H1 (cell line): ENCODE measurements at regions of chr11 and their contacts with region 1.

Region 1: DNA sequence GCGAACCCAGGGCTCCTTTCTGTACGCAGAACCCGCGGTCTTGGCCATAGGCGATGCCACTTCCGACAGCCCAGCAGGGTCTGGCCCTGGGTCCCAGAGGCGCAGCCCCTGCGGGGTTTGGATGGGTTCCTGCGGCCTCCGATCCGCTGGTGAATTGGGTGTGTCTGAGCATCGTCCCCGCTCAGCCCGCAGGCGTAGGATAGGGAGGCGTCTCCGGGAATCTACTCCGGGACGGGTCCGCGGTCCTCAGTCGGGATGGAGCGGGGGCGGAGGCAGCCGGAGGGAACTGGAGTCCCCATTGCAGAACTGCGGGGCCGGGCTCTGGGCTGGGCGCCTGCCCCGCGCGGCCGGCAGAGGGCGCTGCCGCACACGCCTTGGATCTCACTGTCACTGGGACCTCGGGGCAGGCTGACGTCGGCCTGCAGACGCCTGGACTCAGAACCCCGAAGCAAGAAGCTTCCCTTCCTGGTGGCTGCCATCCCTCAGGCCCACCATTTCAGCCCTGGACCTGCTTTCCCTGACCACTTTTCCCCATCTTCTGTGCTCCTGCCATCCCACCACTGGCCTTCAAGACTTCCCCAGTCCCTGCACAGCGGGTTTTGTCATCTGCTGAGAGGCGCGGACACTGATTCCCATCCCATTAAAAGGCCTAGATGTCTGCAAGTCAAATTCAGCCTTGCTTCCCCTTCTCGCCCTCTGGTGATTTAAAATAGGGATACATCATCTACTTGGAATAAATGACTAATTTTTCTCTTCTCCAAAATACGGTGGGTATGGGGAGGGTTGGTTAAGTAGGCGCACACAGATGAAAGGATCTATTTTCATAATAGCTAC is 38.3 kb upstream of the CREB3L1 start:
- DNase-seq: peak; percentile 83 to 97
- H3K4me3 ChIP-seq: peak overlapping the region; percentile 45 to 62 (median 56); a peak in 7 of 8 replicates
- H3K27ac ChIP-seq: no peak overlapping the region
- H3K4me1 ChIP-seq: peaks cover 4 to 25% (median 14%) of the 10 kb centered on the region in 4 experiments
- H3K27me3 ChIP-seq: peaks cover 4 to 13% (median 10%) of the 10 kb centered on the region in 4 experiments; a peak in 6 of 7 replicates
- CTCF ChIP-seq: peak; percentile 89 to 98 (median 96)
- EP300 ChIP-seq: peak in 1 of 2 experiments; percentile 30; a peak in 1 of 3 replicates
- POLR2A ChIP-seq: peak in 1 of 2 experiments; percentile 48; a peak in 1 of 3 replicates
- RAD21 ChIP-seq: peak; percentile 85 to 90

Region 2: DNA sequence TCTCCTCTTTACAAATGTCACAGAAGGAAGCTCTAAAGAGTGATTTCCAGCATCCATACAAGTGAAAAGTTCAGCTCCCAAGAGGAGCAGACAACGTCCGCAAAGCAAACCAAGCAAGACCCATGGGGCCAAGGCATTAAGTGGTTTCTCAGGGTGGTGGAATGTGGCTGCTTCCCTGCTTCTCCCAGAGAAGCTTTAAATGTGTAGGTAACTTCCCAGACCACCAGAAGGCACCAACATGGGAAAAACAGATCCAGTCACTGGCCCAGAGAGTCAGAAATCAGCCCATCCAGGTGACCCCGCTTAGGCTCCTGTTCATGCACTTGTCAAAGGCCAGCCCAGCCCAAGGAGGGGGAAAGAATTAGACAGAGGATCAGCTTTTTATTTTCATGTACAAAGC is 104.6 kb before region 1 on chr11:
- CTCF ChIA-PET with region 1: interaction called, 25 read pairs
- POLR2A ChIA-PET with region 1: interaction called, 11 read pairs
- DNase-seq: no peak
- H3K4me3 ChIP-seq: no peak overlapping the region
- H3K27ac ChIP-seq: no peak overlapping the region
- H3K4me1 ChIP-seq: peaks cover 0 to 2% (median 0%) of the 10 kb centered on the region in 4 experiments; a peak in 1 of 7 replicates
- H3K27me3 ChIP-seq: no peaks in the 10 kb centered on the region
- CTCF ChIP-seq: peak in 2 of 3 experiments; percentile 49 to 53; a peak in 3 of 4 replicates
- EP300 ChIP-seq: no peak
- POLR2A ChIP-seq: no peak
- RAD21 ChIP-seq: peak; percentile 40 to 57

Region 3: DNA sequence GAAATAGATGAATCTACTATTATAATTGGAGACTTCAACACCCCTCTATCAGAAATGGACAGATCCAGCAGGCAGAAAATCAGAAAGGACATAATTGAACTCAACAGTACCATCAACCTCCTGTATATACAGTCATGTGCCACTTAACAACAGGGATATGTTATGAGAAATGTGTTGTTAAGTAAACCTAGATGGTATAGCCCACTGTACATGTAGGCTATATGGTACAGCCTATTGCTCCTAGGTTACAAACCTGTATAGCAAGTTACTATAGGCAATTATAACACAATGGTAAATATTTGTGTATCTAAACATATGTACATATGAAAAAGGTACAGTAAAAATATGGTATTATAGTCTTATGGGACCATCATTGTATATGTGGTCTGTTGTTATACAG is 51.1 kb before region 1 on chr11:
- CTCF ChIA-PET with region 1: no interaction called
- POLR2A ChIA-PET with region 1: no interaction called
- DNase-seq: no peak
- H3K4me3 ChIP-seq: no peak overlapping the region
- H3K27ac ChIP-seq: no peak overlapping the region
- H3K4me1 ChIP-seq: no peaks in the 10 kb centered on the region
- H3K27me3 ChIP-seq: no peaks in the 10 kb centered on the region
- CTCF ChIP-seq: no peak
- EP300 ChIP-seq: no peak
- POLR2A ChIP-seq: no peak
- RAD21 ChIP-seq: no peak

Region 4: DNA sequence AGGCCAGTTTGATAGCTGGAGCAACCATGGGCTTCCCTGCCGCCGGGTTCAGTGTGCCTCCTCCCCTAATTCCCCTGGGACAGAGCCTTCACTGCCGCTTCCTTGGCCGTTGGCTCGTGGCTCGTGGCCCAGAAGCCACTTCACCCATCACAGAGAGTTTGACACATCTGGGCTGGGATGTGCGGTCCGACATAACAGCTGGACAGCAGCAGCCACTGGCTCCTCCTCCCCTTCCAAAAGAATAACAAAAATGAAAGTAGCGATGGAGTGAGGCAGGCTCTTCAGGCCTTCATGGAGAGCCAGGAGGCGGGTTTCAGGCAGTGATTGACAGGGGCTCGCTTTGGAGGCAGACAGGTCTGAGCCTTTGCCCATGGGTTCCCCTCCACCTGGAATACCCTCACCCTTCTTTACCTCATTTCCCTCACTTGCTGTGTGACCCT is 46.4 kb after region 1 on chr11:
- CTCF ChIA-PET with region 1: interaction called, 53 read pairs
- POLR2A ChIA-PET with region 1: interaction called, 27 read pairs
- DNase-seq: no peak
- H3K4me3 ChIP-seq: no peak overlapping the region
- H3K27ac ChIP-seq: no peak overlapping the region
- H3K4me1 ChIP-seq: peaks cover 15 to 21% (median 17%) of the 10 kb centered on the region in 4 experiments
- H3K27me3 ChIP-seq: no peaks in the 10 kb centered on the region
- CTCF ChIP-seq: no peak
- EP300 ChIP-seq: no peak
- POLR2A ChIP-seq: no peak
- RAD21 ChIP-seq: no peak

Region 5: GRCh38 chr11:46315033-46315738 is 76.0 kb after region 1 on chr11:
- CTCF ChIA-PET with region 1: interaction called, 858 read pairs
- POLR2A ChIA-PET with region 1: interaction called, 77 read pairs
- DNase-seq: peak; percentile 77 to 95
- H3K4me3 ChIP-seq: no peak overlapping the region
- H3K27ac ChIP-seq: no peak overlapping the region
- H3K4me1 ChIP-seq: no peaks in the 10 kb centered on the region
- H3K27me3 ChIP-seq: no peaks in the 10 kb centered on the region
- CTCF ChIP-seq: peak; percentile 84 to 93 (median 84)
- EP300 ChIP-seq: no peak
- POLR2A ChIP-seq: no peak
- RAD21 ChIP-seq: peak; percentile 79 to 83

Region 6: GRCh38 chr11:46352063-46352841 is 113.1 kb after region 1 on chr11:
- CTCF ChIA-PET with region 1: interaction called, 15 read pairs
- POLR2A ChIA-PET with region 1: interaction called, 6 read pairs
- DNase-seq: peak in 1 of 2 experiments; percentile 92
- H3K4me3 ChIP-seq: no peak overlapping the region
- H3K27ac ChIP-seq: peak overlapping the region; percentile 29; the same call in 1 of the 2 replicates
- H3K4me1 ChIP-seq: peaks cover 7 to 38% (median 29%) of the 10 kb centered on the region in 4 experiments
- H3K27me3 ChIP-seq: no peaks in the 10 kb centered on the region
- CTCF ChIP-seq: peak; percentile 93 to 98 (median 96)
- EP300 ChIP-seq: no peak; a peak in 1 of 3 replicates
- POLR2A ChIP-seq: no peak
- RAD21 ChIP-seq: peak; percentile 69 to 77